Activated T-helper 1 cell treated with anti-CD3 and anti-CD28 coated beads, Interleukin-12 subunit alpha, Interleukin-12 subunit beta, Interleukin-2, Interleukin-4 antibody, amounts not matched to agents 30 ng/mL and 10 ng/mL and 1 ng/mL, durations not matched to agents 14 hours and 24 hours and 36 hours (primary cell): ENCODE measurements at regions of chr5 and their contacts with region 1.

Region 1: DNA sequence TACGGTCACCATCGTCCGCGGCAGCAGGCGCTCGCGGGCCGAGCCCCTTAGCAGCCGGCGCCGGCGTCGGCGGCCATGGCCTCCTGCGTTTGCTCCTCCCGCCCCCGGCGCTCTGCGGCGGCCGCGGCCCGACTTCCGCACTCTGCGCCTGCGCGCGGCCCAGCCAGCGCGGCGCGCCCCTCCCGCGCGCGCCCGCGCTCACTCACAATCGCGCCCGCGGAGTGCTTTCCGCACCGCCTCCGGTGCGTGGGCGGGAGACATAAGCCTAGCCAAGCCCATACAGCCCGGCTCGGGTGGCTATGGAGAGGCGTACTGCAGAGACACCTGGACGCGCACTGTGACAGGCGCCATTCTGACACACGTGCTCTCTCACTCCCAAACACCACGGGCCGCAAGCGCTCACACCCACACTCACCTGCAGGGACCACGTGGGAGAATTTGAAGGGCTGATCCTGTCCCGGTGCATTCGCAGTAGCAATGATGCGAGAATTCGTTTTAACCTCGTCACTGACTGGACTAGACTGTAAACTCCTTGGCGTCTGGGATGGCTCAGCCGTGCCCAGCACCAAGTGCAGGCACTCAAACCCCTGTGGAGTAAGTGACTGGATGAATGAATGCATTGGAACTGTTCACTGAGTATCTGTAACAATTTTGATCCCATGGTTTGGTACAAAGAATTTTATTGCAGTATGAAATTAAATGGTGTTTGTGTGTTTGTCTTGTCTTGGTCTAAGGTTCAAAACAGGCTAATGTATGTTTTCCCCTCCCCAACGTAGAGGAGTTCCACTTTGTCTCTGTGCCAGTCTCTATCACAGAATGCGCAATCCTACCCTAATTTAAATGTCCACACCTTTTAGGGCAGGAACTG is at the start of gene RNF145:
- DNase-seq: peak; percentile 91
- H3K4me3 Mint-ChIP-seq: peak within 1 kb of the TSS; percentile 97
- H3K27ac Mint-ChIP-seq: peak within 1 kb of the TSS; percentile 97
- H3K4me1 Mint-ChIP-seq: peaks cover 42% of the 10 kb centered on the region
- H3K27me3 Mint-ChIP-seq: peaks cover 4% of the 10 kb centered on the region
- total RNA-seq, gene RNF145: 179 TPM in 2 replicates

Region 2: GRCh38 chr5:157271740-157272271 is 1937.9 kb before region 1 on chr5:
- intact Hi-C with region 1: loop called (anchors 10 kb)
- DNase-seq: peak; percentile 85
- H3K4me3 Mint-ChIP-seq: peak overlapping the region; percentile 74
- H3K27ac Mint-ChIP-seq: peak overlapping the region; percentile 100
- H3K4me1 Mint-ChIP-seq: peaks cover 96% of the 10 kb centered on the region
- H3K27me3 Mint-ChIP-seq: no peaks in the 10 kb centered on the region

Region 3: DNA sequence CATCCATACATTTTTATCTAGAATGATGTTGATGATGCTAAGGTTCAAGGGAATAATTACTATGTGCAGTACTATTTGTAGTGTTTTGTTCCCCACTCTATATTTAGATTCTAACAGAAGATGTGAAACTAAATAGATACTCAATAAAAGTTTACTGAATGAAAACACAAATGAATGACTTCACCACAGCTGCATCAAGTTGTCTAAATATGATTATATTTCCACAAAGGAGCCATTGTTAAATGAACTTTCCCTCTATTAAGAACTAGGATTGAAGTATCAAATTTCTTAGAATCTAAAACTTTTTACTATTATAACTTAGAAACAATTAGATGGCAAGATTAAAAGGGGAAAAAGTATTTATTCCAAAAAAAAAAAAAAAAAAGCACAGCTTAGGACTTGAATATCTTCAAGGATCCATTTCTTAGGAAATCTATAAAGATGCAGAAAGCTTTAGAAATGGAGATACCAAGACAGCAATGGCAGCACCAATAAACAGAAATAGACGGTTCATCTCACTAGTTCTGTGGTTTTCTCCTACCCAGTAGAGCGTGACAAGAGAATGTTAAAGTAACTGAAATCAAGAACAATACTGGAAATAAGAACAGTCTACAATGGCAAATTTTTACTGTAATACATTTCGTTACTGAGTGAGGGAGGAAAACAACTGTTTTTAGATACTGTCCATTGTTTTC is 457.6 kb before region 1 on chr5:
- intact Hi-C with region 1: no loop called
- DNase-seq: no peak
- H3K4me3 Mint-ChIP-seq: no peak overlapping the region
- H3K27ac Mint-ChIP-seq: no peak overlapping the region
- H3K4me1 Mint-ChIP-seq: peaks cover 9% of the 10 kb centered on the region
- H3K27me3 Mint-ChIP-seq: peaks cover 12% of the 10 kb centered on the region

Region 4: GRCh38 chr5:159156426-159157238 is 53.0 kb before region 1 on chr5:
- intact Hi-C with region 1: loop called (anchors 1 kb)
- DNase-seq: peak; percentile 25
- H3K4me3 Mint-ChIP-seq: no peak overlapping the region
- H3K27ac Mint-ChIP-seq: no peak overlapping the region
- H3K4me1 Mint-ChIP-seq: peaks cover 42% of the 10 kb centered on the region
- H3K27me3 Mint-ChIP-seq: no peaks in the 10 kb centered on the region

Region 5: GRCh38 chr5:159184858-159185381 is 24.8 kb before region 1 on chr5:
- intact Hi-C with region 1: loop called (anchors 1 kb)
- DNase-seq: peak; percentile 9
- H3K4me3 Mint-ChIP-seq: peak overlapping the region; percentile 13
- H3K27ac Mint-ChIP-seq: peak overlapping the region; percentile 90
- H3K4me1 Mint-ChIP-seq: peaks cover 78% of the 10 kb centered on the region
- H3K27me3 Mint-ChIP-seq: no peaks in the 10 kb centered on the region

Region 6: DNA sequence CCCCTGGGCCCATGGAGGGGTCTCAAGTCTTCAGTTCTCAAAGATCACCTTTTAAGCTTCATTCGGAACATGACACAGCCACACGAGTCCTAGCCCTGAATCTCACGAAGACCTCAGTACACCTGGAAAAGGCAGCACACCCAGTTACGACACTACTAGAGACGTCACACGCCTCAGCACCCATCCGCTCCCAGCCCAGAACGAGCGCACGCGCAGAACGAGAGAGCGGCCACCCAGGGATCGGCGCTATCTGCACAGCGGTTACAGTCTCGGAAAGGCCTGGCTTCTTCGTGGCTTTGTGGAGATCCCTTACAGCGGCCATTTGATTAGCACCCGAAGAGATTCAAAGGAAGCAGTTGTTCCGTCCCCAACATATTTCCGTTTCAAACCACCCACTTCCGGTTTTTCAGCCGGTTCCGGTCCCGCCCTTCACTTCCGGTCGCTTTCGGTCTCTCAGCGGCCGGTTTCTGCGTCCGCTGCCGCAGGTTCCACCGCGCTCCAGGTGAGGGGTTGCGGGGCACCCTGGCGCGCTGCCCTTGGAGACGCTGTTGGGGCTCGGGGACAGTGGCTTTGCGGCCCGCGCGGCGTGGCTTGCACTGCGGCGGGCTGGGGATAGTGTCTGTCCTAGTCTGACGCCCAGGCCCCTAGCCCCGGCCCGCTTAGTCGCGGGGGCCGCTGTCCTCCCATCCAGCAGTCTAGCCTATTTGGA is 53.3 kb after region 1 on chr5 and contains the start of gene UBLCP1:
- intact Hi-C with region 1: loop called (anchors 1 kb)
- DNase-seq: peak; percentile 71
- H3K4me3 Mint-ChIP-seq: peak within 1 kb of the TSS; percentile 96
- H3K27ac Mint-ChIP-seq: peak within 1 kb of the TSS; percentile 98
- H3K4me1 Mint-ChIP-seq: peaks cover 21% of the 10 kb centered on the region
- H3K27me3 Mint-ChIP-seq: peaks cover 2% of the 10 kb centered on the region
- total RNA-seq, gene UBLCP1: 30.8 and 32.3 TPM in 2 replicates

Region 7: DNA sequence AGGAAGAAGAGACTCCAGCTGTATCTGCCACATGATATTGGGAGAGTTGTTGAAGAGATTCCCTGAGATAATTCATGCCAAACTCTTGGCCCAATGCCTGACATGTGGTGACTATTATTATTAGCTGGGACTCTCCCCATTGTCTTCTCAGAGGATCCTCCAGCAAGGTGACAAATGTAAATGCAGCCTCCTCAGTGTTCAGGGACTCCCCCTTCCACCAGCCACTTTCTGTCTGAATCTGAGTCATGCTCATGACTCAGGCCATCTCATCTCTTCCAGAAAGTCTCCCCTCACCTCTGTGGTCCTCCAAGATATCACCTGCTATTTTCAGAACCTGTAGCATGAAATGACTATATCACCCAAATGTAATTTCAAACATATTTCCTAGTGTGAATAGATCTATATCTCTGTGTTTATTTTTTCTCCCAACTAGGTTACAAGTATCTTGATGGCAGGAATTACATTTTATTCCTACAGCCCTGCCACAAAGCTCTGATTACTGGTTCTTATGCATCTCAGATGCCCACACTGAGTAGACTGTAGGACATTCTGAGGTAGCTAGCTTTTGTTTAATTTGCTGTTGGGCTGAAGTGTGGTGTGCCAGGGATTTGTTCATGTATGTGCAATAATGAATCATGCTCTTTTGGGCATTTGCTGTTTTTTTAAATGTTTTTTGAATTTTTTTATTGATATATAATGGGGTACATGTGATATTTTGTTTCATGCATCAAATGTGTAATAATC is 247.2 kb after region 1 on chr5:
- intact Hi-C with region 1: loop called (anchors 1 kb)
- DNase-seq: peak; percentile 59
- H3K4me3 Mint-ChIP-seq: peak overlapping the region; percentile 46
- H3K27ac Mint-ChIP-seq: peak overlapping the region; percentile 88
- H3K4me1 Mint-ChIP-seq: peaks cover 50% of the 10 kb centered on the region
- H3K27me3 Mint-ChIP-seq: peaks cover 50% of the 10 kb centered on the region

Region 8: DNA sequence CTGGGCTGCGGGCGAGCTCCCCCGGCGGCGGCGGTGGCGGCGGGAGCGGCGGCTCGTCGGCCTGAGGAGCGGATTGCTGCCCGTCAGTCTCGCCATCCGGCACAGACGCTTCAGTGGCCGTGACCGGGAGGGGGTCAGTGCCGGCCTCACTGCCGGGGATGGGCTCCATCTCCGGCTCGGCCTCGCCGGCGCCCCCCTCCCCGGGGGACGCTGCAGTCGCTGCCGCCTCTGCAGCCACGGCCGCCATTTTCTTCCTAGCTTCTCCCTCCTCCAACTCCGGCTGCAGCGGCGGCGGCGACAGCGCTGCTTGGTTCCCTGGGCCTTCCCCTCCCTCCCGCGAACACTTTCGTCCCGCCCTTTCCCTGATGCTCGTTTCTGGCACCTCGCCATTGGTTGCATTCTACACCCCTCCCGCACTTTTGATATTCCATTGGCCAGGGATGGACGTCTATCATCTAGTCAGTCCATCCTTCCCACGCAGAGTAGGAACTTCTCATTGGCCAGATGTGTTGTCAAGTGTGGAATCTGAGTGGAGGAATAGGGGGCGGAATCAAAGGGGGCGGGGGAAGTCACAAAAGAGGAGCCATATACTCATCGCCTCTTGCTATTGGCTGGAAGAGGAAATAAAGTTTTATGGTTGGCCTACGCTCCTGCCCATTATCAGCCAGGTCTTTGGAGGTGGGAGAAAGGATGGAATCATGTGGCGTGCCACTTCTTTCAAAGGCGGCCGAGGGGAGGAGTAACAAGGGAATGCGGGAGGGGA is 909.7 kb after region 1 on chr5 and contains the start of gene PWWP2A:
- intact Hi-C with region 1: loop called (anchors 2 kb)
- DNase-seq: peak; percentile 96
- H3K4me3 Mint-ChIP-seq: peak within 1 kb of the TSS; percentile 95
- H3K27ac Mint-ChIP-seq: peak within 1 kb of the TSS; percentile 96
- H3K4me1 Mint-ChIP-seq: peaks cover 15% of the 10 kb centered on the region
- H3K27me3 Mint-ChIP-seq: peaks cover 4% of the 10 kb centered on the region
- total RNA-seq, gene PWWP2A: 29.7 and 30.2 TPM in 2 replicates